ENCODE measurements at regions of chr15 and their contacts with region 1.

Region 1: GRCh38 chr15:56496635-56497034 is 31.7 kb upstream of the MNS1 start:
- DNase-seq: peak in 1 of 2 experiments; percentile 48
- H3K4me3 ChIP-seq: no peak overlapping the region
- H3K4me3 Mint-ChIP-seq: peak overlapping the region; percentile 30
- H3K27ac Mint-ChIP-seq: no peak overlapping the region
- H3K4me1 ChIP-seq: no peaks in the 10 kb centered on the region
- H3K4me1 Mint-ChIP-seq: peaks cover 7% of the 10 kb centered on the region
- H3K27me3 ChIP-seq: no peaks in the 10 kb centered on the region
- H3K27me3 Mint-ChIP-seq: peaks cover 17% of the 10 kb centered on the region
- CTCF ChIP-seq: peak; percentile 52 to 62

Region 2: DNA sequence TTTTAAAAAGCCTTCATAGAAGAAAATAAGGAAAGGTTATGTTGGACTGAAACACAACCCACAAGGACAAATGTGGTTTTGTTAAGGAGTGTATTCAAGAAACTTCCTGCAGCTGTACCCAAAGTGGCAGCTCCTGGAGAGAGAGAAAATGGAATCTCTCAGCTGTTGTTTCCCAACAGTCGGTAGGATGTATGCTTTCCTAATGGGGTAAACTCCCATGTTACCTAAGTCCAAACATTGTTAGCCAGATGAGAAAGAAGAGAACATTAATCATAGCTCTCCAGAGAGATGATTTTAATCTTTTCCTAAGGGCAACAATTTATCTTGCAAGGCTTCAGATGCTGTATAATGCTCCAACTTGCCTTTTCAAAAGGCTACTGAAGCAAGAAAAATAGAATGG is 154.0 kb before region 1 on chr15:
- CTCF ChIA-PET with region 1: no interaction called
- POLR2A ChIA-PET with region 1: no interaction called
- intact Hi-C with region 1: no loop called
- DNase-seq: no peak
- H3K4me3 ChIP-seq: no peak overlapping the region
- H3K4me3 Mint-ChIP-seq: no peak overlapping the region
- H3K27ac Mint-ChIP-seq: no peak overlapping the region
- H3K4me1 ChIP-seq: no peaks in the 10 kb centered on the region
- H3K4me1 Mint-ChIP-seq: no peaks in the 10 kb centered on the region
- H3K27me3 ChIP-seq: no peaks in the 10 kb centered on the region
- H3K27me3 Mint-ChIP-seq: peaks cover 6% of the 10 kb centered on the region
- CTCF ChIP-seq: no peak

Region 3: GRCh38 chr15:57213862-57214261 is 717.2 kb after region 1 on chr15:
- CTCF ChIA-PET with region 1: no interaction called
- POLR2A ChIA-PET with region 1: no interaction called
- intact Hi-C with region 1: loop called (anchors 5 kb)
- DNase-seq: peak in 1 of 2 experiments; percentile 46
- H3K4me3 ChIP-seq: no peak overlapping the region
- H3K4me3 Mint-ChIP-seq: peak overlapping the region; percentile 37
- H3K27ac Mint-ChIP-seq: no peak overlapping the region
- H3K4me1 ChIP-seq: peaks cover 4% of the 10 kb centered on the region
- H3K4me1 Mint-ChIP-seq: peaks cover 21% of the 10 kb centered on the region
- H3K27me3 ChIP-seq: no peaks in the 10 kb centered on the region
- H3K27me3 Mint-ChIP-seq: no peaks in the 10 kb centered on the region
- CTCF ChIP-seq: peak in 1 of 2 experiments; percentile 28

Measured in Caco-2 (cell line).